GM10248 (cell line): ENCODE measurements at regions of chr14 and their contacts with region 1.

Region 1: GRCh38 chr14:66496188-66496807 is 10.1 kb downstream of the CCDC196 start:
- DNase-seq: no peak
- CTCF ChIP-seq: no peak

Region 2: DNA sequence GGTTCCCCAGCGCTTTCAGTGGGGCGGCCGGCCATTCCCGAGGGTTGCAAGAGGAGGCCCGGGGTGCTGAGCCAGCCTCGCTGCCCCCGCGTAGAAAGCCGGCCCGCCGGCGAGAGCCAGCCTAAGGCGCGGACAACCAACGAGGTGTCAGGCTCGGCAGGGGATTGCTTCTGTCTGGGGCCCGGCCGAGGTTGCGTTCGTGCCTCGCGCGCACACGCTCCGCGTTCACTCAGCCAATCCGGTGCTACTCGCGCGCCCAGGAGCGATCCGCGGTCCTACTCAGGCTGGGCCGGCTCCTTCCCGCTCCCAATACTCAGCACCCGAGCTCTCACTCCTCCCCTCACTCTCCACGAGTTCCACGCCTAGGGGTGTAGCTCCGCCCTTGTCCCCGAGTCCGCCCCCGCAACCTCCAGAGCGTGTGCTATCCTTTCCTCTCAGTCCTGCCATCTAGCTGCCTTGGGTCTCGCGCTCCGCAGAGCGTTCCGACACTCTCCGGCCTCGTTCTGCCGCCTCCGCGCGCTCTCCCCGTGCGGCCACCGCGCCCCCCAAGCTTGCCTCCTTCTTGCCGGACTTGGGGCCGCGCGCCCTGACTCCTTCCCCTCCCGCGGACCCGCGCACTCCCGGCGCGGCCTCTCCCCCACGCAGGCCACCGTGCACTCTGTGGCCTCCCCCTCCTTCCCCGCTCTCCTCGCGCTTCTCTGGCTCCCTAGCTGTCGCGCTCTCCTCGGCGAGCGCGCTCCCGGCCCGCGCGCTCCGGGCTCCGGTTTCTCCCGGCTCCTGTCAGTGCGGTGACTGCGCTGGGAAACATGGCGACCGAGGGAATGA is 11.6 kb after region 1 on chr14 and contains the start of gene GPHN:
- CTCF ChIA-PET with region 1: interaction called, 22 read pairs
- POLR2A ChIA-PET with region 1: interaction called, 6 read pairs
- DNase-seq: peak; percentile 91
- CTCF ChIP-seq: peak; percentile 21

Region 3: DNA sequence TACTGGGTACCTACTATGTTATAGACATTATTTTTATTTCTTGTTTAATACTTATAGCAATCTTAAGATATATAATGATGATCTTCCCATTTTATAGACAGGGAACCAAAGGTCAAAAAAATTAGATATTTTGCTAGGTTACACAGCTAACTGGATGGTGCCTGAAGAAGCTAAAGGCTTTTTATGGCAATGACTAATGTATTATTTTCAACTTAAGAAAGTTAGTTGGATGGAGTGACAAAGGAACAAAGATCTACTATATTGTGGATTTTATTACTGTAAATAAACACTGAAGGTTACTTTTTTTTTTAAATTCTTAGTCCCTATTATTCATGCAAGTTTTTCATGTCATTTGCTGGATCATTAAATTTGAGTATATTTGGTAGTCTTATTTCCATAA is 239.6 kb after region 1 on chr14:
- CTCF ChIA-PET with region 1: no interaction called
- POLR2A ChIA-PET with region 1: no interaction called
- DNase-seq: no peak
- CTCF ChIP-seq: no peak